Right ventricle myocardium inferior (tissue), 1 donor: ENCODE measurements at regions of chr4 and their contacts with region 1.

Region 1: GRCh38 chr4:176340871-176341685 is 21.3 kb downstream of the SPCS3 start:
- DNase-seq: no peak
- ATAC-seq: peak; percentile 28

Region 2: DNA sequence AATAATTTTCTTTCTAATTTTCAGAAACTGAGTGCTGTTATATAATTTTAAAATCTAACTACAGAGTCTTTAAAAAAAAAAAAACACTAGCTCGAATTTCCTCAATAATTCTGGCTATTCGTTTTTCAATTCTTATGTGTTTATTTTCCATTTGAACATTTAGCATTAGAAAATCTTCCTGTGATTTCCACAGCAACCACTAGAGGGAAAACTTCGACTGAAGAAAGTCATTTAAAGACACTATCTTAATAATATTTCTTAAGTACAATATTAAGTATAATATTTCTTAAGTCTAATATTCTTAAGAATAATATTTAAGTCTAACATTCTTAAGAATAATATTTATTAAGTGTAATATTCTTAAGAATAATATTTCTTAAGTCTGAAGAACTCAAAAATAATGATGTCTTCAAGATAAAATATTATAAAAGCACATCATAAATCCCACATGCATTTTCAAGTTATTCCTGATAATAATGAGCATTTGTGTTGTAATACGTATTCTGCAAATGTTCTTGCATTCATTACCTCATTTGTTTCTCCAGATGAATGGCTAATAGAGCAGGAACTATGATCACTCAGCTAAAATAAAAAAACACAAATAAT is 393.9 kb before region 1 on chr4:
- intact Hi-C with region 1: loop called (anchors 5 kb)
- DNase-seq: no peak
- ATAC-seq: no peak

Region 3: DNA sequence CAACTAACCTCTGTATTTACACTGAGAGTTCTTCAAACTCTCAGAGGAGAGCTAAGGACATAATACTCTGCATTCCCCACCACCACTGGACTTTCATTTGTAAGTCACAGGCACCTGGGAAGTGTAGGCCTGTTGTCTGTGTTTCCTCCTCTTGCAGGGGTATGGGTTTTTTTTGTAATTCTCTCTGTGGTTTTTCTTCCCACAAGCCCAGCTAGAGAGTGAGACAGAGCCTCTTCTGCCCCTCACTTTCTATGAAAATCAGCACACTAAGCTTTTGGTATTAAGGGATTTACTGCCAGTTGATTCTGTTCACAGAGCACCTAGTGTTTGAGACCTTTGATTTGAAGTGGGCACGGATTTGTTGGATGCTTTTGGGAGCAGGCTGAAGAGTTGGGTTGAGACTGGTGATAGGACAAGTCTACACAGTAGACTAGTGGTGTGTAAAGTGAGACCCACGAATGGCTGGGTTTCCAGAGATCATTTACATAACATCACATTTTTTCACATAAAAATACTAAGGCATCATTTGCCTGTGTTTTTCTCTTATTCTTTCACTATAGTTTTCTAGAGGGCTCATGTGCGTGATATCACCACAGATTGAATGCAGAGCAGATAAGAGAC is 304.4 kb before region 1 on chr4:
- intact Hi-C with region 1: loop called (anchors 2 kb)
- DNase-seq: no peak
- ATAC-seq: no peak

Region 4: DNA sequence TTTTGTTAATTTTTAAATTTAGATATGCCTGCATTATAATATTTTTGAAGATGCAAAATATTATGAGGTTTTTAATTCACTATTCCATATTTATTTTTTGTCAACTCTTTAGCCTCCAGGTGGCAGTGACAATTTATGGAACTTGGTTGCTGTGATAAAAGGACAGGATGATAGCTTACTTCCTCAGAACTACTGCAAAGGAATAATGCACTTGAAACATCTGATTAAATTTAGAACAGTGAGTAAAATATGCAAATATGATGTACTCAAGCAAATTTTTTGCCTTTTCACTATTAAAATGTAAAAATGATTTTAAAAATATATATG is 190.8 kb before region 1 on chr4:
- intact Hi-C with region 1: loop called (anchors 2 kb)
- DNase-seq: no peak
- ATAC-seq: no peak

Region 5: DNA sequence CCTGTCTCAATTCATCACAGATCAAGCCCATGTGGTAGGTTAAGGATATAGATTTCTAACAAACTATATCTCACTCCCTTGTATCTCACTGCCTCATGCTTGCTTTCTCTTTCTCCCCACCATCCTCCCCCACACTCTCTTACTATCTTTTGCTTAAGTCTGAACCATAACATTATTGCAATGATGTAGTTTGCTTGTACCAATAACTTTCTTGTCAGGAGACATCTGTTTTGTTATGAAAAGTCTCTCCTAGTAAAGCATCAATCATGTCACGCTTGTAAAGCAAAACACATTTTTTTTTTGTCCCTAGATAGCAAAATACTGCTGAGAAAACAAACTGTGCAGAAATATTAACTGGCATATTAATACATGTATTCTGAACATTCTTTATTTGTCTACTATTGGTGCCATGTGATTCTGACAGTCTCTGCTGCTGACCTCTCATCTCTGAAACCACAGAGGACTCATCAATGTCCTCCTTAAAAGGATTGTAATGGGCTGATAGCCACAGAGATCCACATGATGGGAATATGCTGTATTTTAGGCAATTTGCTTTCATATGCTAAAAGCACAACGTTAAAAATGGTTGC is 234.2 kb after region 1 on chr4:
- intact Hi-C with region 1: no loop called
- DNase-seq: no peak
- ATAC-seq: no peak